ENCODE measurements at regions of chr17 and their contacts with region 1.

Region 1: GRCh38 chr17:43546319-43547188 is at the start of gene ETV4:
- DNase-seq: peak; percentile 97
- ATAC-seq: peak; percentile 65
- H3K4me3 ChIP-seq: peak within 1 kb of the TSS; percentile 75
- H3K27ac ChIP-seq: peak within 1 kb of the TSS; percentile 94
- H3K4me1 ChIP-seq: peaks cover 33% of the 10 kb centered on the region
- H3K27me3 ChIP-seq: no peaks in the 10 kb centered on the region
- CTCF ChIP-seq: no peak
- total RNA-seq, gene ETV4: 143 and 147 TPM in 2 replicates

Region 2: DNA sequence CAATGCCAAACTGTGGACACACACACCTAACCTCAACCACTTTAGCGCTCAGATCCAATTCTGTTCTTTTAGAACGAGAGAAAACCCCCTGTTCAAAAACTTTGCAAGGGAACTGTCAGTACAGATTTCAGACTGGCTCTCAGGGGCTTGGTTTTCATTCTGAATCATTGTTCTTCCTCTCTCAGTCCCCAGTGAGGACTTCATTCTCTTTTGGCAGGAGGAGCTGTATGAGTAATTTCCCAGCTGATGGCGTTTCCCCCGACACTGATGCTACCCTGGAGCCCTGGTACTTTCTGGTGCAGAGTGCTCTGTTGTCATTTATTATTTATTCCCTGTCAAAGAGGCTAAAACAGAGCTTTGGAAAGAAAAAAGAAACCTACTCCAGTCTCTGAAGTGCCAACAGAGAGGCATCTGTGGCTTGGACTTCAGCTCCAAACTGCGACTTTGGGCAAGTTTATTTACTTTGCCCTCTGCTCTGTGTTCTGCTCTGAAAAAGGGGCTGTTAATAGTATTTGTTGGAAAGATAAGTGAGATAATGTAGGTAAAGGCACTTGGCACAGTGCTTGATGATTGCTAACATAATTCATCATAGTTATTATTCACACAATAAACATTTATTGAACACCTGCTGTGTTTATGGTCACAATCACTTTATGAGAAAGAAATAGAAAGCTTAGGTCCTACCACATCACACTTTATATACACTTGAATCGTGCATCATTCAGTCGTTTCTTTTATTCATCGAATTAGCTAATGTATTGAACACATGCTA is 28.8 kb before region 1 on chr17:
- CTCF ChIA-PET with region 1: interaction called, 3 read pairs
- POLR2A ChIA-PET with region 1: interaction called, 4 read pairs
- intact Hi-C with region 1: loop called (anchors 1 kb)
- DNase-seq: peak; percentile 64
- ATAC-seq: peak; percentile 86
- H3K4me3 ChIP-seq: no peak overlapping the region
- H3K27ac ChIP-seq: no peak overlapping the region
- H3K4me1 ChIP-seq: peaks cover 14% of the 10 kb centered on the region; the same call in 1 of the 2 replicates
- H3K27me3 ChIP-seq: no peaks in the 10 kb centered on the region
- CTCF ChIP-seq: no peak

Region 3: DNA sequence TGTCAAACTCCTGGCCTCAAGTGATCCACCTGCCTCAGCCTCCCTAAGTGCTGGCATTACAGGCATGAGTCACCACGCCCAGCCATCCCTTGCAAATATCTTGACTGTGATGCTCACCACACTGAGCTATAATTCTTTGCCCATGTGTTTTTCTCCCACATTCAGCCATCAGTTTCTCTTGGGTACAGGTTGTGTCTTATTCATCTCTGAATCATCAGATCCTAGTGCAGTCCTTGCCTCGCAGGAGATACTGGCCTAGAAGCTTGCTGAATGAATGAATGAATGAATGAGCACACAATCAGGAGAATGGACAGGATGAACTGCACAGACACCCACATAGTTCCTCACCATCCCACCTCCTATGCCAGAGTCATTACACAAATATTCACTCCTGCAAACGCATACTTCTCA is 24.0 kb after region 1 on chr17:
- CTCF ChIA-PET with region 1: interaction called, 10 read pairs
- POLR2A ChIA-PET with region 1: no interaction called
- intact Hi-C with region 1: no loop called
- DNase-seq: peak; percentile 91
- ATAC-seq: peak; percentile 77
- H3K4me3 ChIP-seq: no peak overlapping the region
- H3K27ac ChIP-seq: no peak overlapping the region
- H3K4me1 ChIP-seq: peaks cover 11% of the 10 kb centered on the region
- H3K27me3 ChIP-seq: no peaks in the 10 kb centered on the region
- CTCF ChIP-seq: no peak

Region 4: DNA sequence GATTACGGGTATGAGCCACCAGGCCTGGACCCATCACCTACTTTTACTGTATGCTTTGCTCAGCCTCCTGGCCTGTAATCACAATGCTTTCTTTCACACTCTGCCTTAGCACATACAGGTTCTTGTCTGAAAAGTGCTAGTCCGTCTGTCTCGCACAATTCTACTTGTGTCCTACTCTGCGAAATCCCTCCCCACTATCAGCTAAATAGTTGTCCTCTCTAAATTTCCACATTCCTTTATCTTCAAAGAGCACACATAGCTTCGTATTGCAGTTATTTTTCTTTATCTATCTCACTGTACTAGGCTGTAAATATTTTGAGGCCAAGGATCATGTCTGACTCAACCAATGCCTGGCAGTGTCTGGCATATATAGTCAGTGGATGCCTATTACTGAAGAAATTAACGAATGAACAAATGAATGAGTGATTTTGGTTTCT is 38.1 kb after region 1 on chr17:
- CTCF ChIA-PET with region 1: no interaction called
- POLR2A ChIA-PET with region 1: no interaction called
- intact Hi-C with region 1: loop called (anchors 1 kb)
- DNase-seq: peak; percentile 66
- ATAC-seq: peak; percentile 47
- H3K4me3 ChIP-seq: no peak overlapping the region
- H3K27ac ChIP-seq: peak overlapping the region; percentile 82
- H3K4me1 ChIP-seq: peaks cover 28% of the 10 kb centered on the region
- H3K27me3 ChIP-seq: no peaks in the 10 kb centered on the region
- CTCF ChIP-seq: no peak

Region 5: GRCh38 chr17:43608313-43608712 is 61.8 kb after region 1 on chr17:
- CTCF ChIA-PET with region 1: no interaction called
- POLR2A ChIA-PET with region 1: no interaction called
- intact Hi-C with region 1: no loop called
- DNase-seq: peak; percentile 27
- ATAC-seq: peak; percentile 27; the same call in 1 of the 2 replicates
- H3K4me3 ChIP-seq: no peak overlapping the region
- H3K27ac ChIP-seq: no peak overlapping the region
- H3K4me1 ChIP-seq: no peaks in the 10 kb centered on the region
- H3K27me3 ChIP-seq: no peaks in the 10 kb centered on the region
- CTCF ChIP-seq: no peak

Region 6: GRCh38 chr17:44123356-44124117 is 577.0 kb after region 1 on chr17 and contains the start of gene HDAC5:
- CTCF ChIA-PET with region 1: no interaction called
- POLR2A ChIA-PET with region 1: interaction called, 11 read pairs
- intact Hi-C with region 1: no loop called
- DNase-seq: peak; percentile 97
- ATAC-seq: peak; percentile 92
- H3K4me3 ChIP-seq: peak within 1 kb of the TSS; percentile 72
- H3K27ac ChIP-seq: peak within 1 kb of the TSS; percentile 57
- H3K4me1 ChIP-seq: peaks cover 13% of the 10 kb centered on the region
- H3K27me3 ChIP-seq: no peaks in the 10 kb centered on the region
- CTCF ChIP-seq: peak; percentile 77
- total RNA-seq, gene HDAC5: 39.1 and 47.1 TPM in 2 replicates

Measured in PC-3 (cell line).